ENCODE measurements at regions of chr2 and their contacts with region 1.

Region 1: DNA sequence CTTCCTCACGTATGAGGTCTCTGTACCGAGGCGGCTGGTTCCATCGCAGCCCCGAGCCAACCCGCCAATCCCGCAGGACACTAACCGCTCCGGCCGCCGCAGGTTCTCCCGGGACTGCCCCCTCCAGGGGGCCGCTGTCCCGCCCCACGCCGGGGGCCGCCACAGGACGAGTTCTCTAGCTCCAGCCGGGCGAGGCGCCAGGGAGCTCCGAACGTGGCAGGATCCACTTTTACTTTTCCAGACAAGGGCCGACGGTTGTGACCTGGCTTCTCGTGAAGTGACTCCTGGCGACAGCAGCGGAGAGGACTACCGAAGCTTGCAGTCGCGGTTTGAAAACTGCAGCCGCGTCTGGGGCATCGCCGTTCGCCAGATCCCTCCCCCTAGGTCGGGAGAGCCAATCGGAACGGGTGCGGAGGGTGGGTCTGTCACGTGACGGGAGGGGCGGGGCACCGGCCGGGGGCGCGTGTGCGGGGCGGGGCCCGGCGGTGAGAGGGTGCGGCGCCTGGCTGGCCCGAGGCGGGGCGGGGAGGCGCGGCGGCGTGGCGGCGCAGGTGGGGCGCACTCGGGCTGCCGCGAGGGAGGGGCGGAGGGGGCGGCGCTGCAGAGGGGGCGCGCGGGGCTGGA is at the start of gene STK17B:
- DNase-seq: peak; percentile 95
- H3K4me3 Mint-ChIP-seq: peak within 1 kb of the TSS; percentile 82
- H3K27ac Mint-ChIP-seq: peak within 1 kb of the TSS; percentile 83
- H3K4me1 Mint-ChIP-seq: peaks cover 31% of the 10 kb centered on the region
- H3K27me3 Mint-ChIP-seq: no peaks in the 10 kb centered on the region
- CTCF ChIP-seq: no peak
- total RNA-seq, gene STK17B: 32.3 and 38.5 TPM in 2 replicates

Region 2: GRCh38 chr2:195961873-195962272 is 209.5 kb before region 1 on chr2:
- CTCF ChIA-PET with region 1: no interaction called
- intact Hi-C with region 1: no loop called
- DNase-seq: no peak
- H3K4me3 Mint-ChIP-seq: no peak overlapping the region
- H3K27ac Mint-ChIP-seq: no peak overlapping the region
- H3K4me1 Mint-ChIP-seq: no peaks in the 10 kb centered on the region
- H3K27me3 Mint-ChIP-seq: no peaks in the 10 kb centered on the region
- CTCF ChIP-seq: no peak

Region 3: GRCh38 chr2:196000551-196000950 is 170.8 kb before region 1 on chr2:
- CTCF ChIA-PET with region 1: no interaction called
- intact Hi-C with region 1: no loop called
- DNase-seq: no peak
- H3K4me3 Mint-ChIP-seq: no peak overlapping the region
- H3K27ac Mint-ChIP-seq: no peak overlapping the region
- H3K4me1 Mint-ChIP-seq: no peaks in the 10 kb centered on the region
- H3K27me3 Mint-ChIP-seq: no peaks in the 10 kb centered on the region
- CTCF ChIP-seq: no peak

Region 4: DNA sequence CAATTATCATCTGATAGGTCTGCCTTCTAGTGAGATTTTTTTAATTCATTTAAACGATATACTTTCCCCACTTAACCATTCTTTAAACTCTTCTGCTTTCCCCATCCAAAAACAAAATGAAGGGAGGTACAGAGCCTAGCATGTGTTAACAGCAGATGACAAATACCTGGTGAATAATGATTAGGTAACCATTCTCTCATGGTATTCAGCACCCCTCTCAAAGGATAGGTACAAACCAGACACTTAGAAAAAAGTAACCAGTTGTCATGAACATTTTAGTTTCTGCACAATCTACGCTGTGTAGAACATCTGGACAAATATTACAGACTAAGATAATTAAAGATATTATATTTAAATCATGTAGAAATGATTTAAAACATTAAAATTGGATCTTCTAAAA is 159.0 kb before region 1 on chr2:
- CTCF ChIA-PET with region 1: no interaction called
- intact Hi-C with region 1: no loop called
- DNase-seq: no peak
- H3K4me3 Mint-ChIP-seq: no peak overlapping the region
- H3K27ac Mint-ChIP-seq: no peak overlapping the region
- H3K4me1 Mint-ChIP-seq: no peaks in the 10 kb centered on the region
- H3K27me3 Mint-ChIP-seq: no peaks in the 10 kb centered on the region
- CTCF ChIP-seq: no peak

Region 5: DNA sequence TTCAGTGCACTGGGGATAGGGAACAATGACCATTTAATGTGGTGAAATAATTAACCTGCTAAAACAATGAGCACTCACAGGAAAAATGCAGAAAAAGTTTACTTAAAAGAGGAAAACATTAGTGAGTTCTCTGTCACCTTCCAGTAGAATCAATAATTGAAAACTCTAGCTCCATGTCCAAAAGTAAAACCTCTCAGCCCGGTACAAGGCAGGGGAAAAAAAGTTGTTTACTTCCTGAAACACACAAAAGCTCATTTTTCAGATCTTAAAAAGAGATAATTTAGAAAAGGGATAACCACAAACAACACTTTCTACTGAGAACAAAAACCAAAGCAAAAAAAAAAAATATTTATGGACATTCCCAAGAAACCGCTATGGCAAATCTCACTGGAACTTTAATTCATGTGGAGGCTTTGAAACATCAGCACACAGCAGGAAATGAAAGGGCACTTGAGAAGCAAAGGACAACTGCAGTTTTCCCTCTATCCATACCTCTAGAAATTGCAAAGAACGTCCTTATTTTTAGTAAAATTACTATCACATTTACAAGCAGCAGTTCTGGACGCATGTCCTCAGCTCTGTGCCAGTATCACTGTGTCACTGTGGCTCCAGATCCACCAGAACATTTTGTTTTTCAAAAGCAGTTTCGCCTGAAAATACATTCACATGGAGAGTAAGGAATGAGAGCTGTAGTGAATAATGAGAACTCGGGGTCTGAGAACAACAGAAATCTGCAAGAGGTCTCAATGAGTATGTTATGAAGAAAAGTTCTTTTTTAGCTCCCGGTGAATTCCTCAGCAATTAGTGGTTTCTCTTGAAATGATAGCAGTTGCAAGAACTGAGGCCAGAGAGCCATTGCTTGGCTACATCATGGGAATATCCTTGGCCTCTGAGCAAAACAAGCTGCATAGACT is 58.0 kb before region 1 on chr2:
- CTCF ChIA-PET with region 1: interaction called, 11 read pairs
- intact Hi-C with region 1: no loop called
- DNase-seq: peak; percentile 19
- H3K4me3 Mint-ChIP-seq: peak overlapping the region; percentile 56
- H3K27ac Mint-ChIP-seq: peak overlapping the region; percentile 95
- H3K4me1 Mint-ChIP-seq: peaks cover 20% of the 10 kb centered on the region
- H3K27me3 Mint-ChIP-seq: no peaks in the 10 kb centered on the region
- CTCF ChIP-seq: no peak

Region 6: GRCh38 chr2:196233021-196233804 is 61.9 kb after region 1 on chr2:
- CTCF ChIA-PET with region 1: no interaction called
- intact Hi-C with region 1: loop called (anchors 5 kb)
- DNase-seq: peak; percentile 72
- H3K4me3 Mint-ChIP-seq: peak overlapping the region; percentile 12
- H3K27ac Mint-ChIP-seq: peak overlapping the region; percentile 84
- H3K4me1 Mint-ChIP-seq: peaks cover 23% of the 10 kb centered on the region
- H3K27me3 Mint-ChIP-seq: no peaks in the 10 kb centered on the region
- CTCF ChIP-seq: no peak

Region 7: DNA sequence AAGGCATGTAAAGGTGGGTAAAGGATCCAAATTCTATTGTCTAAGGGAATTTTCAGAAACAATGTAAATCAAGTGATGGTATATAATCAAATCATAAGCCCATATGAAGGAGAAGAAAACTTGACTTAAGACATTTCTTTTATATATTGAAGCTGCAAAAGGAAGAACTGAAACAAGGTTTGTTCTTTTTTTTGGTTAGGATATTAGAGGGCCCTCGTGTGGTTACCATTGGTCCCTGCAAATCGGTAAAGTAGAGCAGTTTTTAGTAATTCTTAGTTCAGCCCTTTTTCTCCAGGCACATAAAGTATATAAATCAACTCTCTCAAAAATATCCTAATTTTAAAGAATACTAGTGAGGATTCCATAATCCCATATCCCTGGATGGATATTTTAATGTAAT is 105.6 kb after region 1 on chr2:
- CTCF ChIA-PET with region 1: interaction called, 5 read pairs
- intact Hi-C with region 1: loop called (anchors 1 kb)
- DNase-seq: peak; percentile 13
- H3K4me3 Mint-ChIP-seq: no peak overlapping the region
- H3K27ac Mint-ChIP-seq: no peak overlapping the region
- H3K4me1 Mint-ChIP-seq: peaks cover 48% of the 10 kb centered on the region
- H3K27me3 Mint-ChIP-seq: no peaks in the 10 kb centered on the region
- CTCF ChIP-seq: peak; percentile 45

Region 8: DNA sequence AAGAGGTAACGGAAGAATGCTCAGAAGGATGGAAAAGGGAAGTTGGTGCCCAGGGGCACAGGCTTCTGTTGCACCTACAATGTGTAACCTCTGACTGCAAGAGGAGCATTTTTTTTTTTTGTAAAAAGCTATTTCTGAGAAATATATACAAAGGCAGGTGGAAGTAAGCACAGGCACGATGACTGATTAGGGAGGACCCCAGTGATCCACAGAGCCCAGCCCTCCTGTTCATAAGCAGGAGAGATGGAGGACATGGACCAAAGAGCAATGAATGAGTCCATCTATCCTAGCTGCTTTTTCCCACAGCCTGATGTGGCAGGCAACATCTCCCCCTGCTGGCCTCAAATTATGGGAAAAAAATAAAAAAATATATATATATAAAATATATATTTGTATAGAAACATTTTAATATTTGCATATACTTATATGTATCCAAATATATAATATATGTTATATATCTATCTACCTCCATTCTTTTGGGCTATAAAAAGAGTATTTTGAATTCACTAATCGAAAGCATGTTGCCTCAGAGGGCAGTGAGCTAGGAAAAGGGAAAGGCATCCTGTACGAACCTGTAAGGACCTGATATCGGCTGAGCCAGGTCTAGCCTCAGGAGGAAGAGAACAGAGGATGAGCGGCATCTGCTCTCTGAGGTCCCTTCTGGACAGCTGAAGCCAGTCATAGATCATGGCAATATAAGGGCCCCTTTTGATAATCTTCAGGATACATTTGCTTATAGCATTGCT is 166.0 kb after region 1 on chr2:
- CTCF ChIA-PET with region 1: no interaction called
- intact Hi-C with region 1: loop called (anchors 5 kb)
- DNase-seq: peak; percentile 34
- H3K4me3 Mint-ChIP-seq: no peak overlapping the region
- H3K27ac Mint-ChIP-seq: no peak overlapping the region
- H3K4me1 Mint-ChIP-seq: peaks cover 34% of the 10 kb centered on the region
- H3K27me3 Mint-ChIP-seq: no peaks in the 10 kb centered on the region
- CTCF ChIP-seq: peak; percentile 64

Measured in Calu3 (cell line).